A549 (cell line): ENCODE measurements at regions of chr7 and their contacts with region 1.

Region 1: GRCh38 chr7:23570592-23571200 is 26.5 kb upstream of the CCDC126 start:
- DNase-seq: peak; percentile 67 to 74
- ATAC-seq: peak; percentile 97 to 99
- H3K4me3 ChIP-seq: no peak overlapping the region
- H3K27ac ChIP-seq: no peak overlapping the region
- H3K4me1 ChIP-seq: no peaks in the 10 kb centered on the region
- CTCF ChIP-seq: peak; percentile 94
- EP300 ChIP-seq: no peak
- POLR2A ChIP-seq: no peak
- RAD21 ChIP-seq: peak; percentile 96 to 98

Region 2: GRCh38 chr7:23520582-23520981 is 50.1 kb before region 1 on chr7:
- CTCF ChIA-PET with region 1: no interaction called
- POLR2A ChIA-PET with region 1: no interaction called
- DNase-seq: peak in 1 of 2 experiments; percentile 29
- ATAC-seq: peak in 1 of 2 experiments; percentile 38; a peak in 3 of 6 replicates
- H3K4me3 ChIP-seq: no peak overlapping the region
- H3K27ac ChIP-seq: no peak overlapping the region
- H3K4me1 ChIP-seq: peaks cover 13% of the 10 kb centered on the region; the same call in 2 of the 3 replicates
- CTCF ChIP-seq: peak; percentile 40; the same call in 2 of the 3 replicates
- EP300 ChIP-seq: no peak
- POLR2A ChIP-seq: no peak
- RAD21 ChIP-seq: peak; percentile 41 to 42; a peak in 4 of 5 replicates

Region 3: DNA sequence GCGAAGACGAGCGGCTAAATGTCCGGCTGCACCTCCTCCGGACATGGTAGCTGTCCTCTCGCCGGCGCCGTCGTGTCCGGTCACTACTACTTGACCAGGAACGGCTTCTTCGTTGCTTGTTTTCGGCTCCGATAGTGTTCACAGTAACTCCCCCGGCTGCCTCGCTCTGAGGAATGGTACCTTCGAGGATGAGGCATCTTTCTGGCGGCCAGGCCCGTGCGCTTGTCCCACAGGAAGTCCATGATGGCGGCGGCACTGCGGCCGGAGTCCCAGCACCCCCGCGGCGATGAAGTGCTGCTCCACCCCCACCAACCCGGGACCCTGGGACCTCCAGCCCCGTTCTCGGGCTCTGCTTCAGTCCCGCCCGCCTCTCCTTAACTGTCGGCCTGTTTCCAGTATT is 15.5 kb after region 1 on chr7:
- CTCF ChIA-PET with region 1: interaction called, 15 read pairs
- POLR2A ChIA-PET with region 1: no interaction called
- DNase-seq: no peak
- ATAC-seq: no peak
- H3K4me3 ChIP-seq: no peak overlapping the region
- H3K27ac ChIP-seq: no peak overlapping the region
- H3K4me1 ChIP-seq: no peaks in the 10 kb centered on the region
- CTCF ChIP-seq: no peak
- EP300 ChIP-seq: no peak
- POLR2A ChIP-seq: no peak
- RAD21 ChIP-seq: no peak

Region 4: DNA sequence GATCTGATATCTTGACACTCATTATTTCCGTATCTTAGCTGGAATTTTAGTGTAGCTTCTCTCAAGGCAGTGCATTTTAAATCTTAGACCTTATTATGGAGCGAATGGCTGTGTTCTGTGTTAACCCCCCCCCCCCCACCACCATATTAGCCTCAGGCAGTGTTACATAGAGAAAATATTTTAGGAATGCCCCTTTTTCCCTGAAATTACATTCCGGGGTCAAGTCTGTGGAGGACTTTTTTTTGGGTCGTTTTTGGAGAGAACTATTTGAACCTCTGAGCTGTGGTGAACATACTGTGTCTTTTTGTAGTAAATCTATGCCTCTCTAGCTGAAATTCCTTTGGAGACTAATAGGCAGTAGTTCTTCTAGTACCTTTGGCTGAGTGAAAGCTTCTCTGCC is 29.6 kb after region 1 on chr7:
- CTCF ChIA-PET with region 1: interaction called, 10 read pairs
- POLR2A ChIA-PET with region 1: no interaction called
- DNase-seq: no peak
- ATAC-seq: no peak
- H3K4me3 ChIP-seq: no peak overlapping the region
- H3K27ac ChIP-seq: no peak overlapping the region
- H3K4me1 ChIP-seq: peaks cover 7% of the 10 kb centered on the region
- CTCF ChIP-seq: no peak
- EP300 ChIP-seq: no peak
- POLR2A ChIP-seq: no peak
- RAD21 ChIP-seq: no peak

Region 5: GRCh38 chr7:23712368-23713284 is 141.9 kb after region 1 on chr7:
- CTCF ChIA-PET with region 1: interaction called, 115 read pairs
- POLR2A ChIA-PET with region 1: no interaction called
- DNase-seq: peak; percentile 54 to 64
- ATAC-seq: peak; percentile 61 to 83; a peak in 3 of 6 replicates
- H3K4me3 ChIP-seq: no peak overlapping the region
- H3K27ac ChIP-seq: no peak overlapping the region
- H3K4me1 ChIP-seq: peaks cover 27% of the 10 kb centered on the region
- CTCF ChIP-seq: peak; percentile 96
- EP300 ChIP-seq: no peak
- POLR2A ChIP-seq: no peak
- RAD21 ChIP-seq: peak; percentile 90 to 95